ENCODE measurements at regions of chr6 and their contacts with region 1.

Region 1: GRCh38 chr6:21270636-21271201 is 322.8 kb upstream of the SOX4 start:
- DNase-seq: no peak
- H3K4me3 Mint-ChIP-seq: no peak overlapping the region
- H3K27ac Mint-ChIP-seq: no peak overlapping the region
- H3K4me1 Mint-ChIP-seq: peaks cover 5% of the 10 kb centered on the region
- H3K27me3 Mint-ChIP-seq: no peaks in the 10 kb centered on the region
- CTCF ChIP-seq: no peak

Region 2: GRCh38 chr6:20564269-20564668 is 706.5 kb before region 1 on chr6:
- CTCF ChIA-PET with region 1: interaction called, 10 read pairs
- intact Hi-C with region 1: no loop called
- DNase-seq: no peak
- H3K4me3 Mint-ChIP-seq: no peak overlapping the region
- H3K27ac Mint-ChIP-seq: no peak overlapping the region
- H3K4me1 Mint-ChIP-seq: peaks cover 9% of the 10 kb centered on the region
- H3K27me3 Mint-ChIP-seq: no peaks in the 10 kb centered on the region
- CTCF ChIP-seq: peak; percentile 69

Region 3: DNA sequence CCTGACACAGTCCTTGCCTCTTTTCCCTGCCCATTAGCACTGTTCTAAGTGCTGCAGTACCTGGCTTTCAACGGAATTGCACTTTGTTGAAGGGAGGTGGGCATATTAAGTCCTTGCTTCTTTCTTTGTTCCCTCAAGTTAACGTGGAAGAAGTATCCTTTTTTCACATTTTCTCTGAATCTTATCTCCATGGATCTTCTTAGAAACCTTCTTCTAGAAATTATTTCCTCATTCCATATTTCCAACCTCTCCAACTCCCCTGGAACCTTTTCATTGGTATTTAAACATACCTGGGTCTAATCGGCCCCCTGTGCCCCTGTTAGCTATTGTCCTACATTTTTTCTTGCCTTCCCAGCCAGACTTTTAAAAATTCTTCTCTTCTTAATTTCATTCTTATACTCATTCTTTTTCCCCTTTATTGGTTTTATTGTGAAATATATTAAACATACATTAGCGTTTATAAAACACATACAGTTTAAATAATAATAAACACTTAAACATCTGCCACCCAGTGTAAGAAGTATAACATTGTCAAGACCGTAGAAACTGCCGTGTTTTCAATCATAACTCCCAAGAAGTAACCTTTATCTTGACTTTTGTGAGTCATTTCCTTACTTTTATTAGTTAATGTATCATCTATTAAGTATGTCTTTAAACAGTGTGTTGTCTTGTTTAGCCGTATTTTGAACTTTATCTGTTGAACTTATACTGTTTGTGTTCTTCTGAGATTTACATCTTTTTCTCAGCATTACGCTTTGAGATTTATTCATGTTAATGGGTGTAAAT is 618.2 kb before region 1 on chr6:
- CTCF ChIA-PET with region 1: no interaction called
- intact Hi-C with region 1: no loop called
- DNase-seq: no peak
- H3K4me3 Mint-ChIP-seq: peak overlapping the region; percentile 54
- H3K27ac Mint-ChIP-seq: peak overlapping the region; percentile 96
- H3K4me1 Mint-ChIP-seq: peaks cover 72% of the 10 kb centered on the region
- H3K27me3 Mint-ChIP-seq: no peaks in the 10 kb centered on the region
- CTCF ChIP-seq: no peak